GM12878 (cell line): ENCODE measurements at regions of chr9 and their contacts with region 1.

Region 1: DNA sequence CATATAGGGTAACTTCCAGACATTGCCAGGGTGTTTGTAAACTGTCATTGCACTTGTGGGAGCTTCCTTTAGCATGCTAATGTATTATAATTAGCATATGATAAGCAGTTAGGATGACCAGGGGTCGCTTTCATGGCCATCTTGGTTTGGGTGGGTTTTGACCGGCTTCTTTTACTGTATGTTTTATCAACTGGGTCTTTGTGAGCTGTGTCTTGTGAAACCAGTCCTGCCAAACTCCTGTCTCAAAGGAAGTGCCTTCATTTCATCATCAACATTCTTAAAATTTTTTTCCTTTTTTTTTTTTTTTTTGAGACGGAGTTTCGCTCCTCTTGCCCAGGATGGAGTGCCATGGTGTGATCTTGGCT is 11.9 kb upstream of the MELK start:
- DNase-seq: no peak
- ATAC-seq: no peak
- H3K4me3 ChIP-seq: no peak overlapping the region
- H3K27ac ChIP-seq: no peak overlapping the region
- H3K4me1 ChIP-seq: no peaks in the 10 kb centered on the region
- H3K27me3 ChIP-seq: no peaks in the 10 kb centered on the region
- CTCF ChIP-seq: no peak
- EP300 ChIP-seq: no peak
- POLR2A ChIP-seq: no peak
- RAD21 ChIP-seq: no peak

Region 2: DNA sequence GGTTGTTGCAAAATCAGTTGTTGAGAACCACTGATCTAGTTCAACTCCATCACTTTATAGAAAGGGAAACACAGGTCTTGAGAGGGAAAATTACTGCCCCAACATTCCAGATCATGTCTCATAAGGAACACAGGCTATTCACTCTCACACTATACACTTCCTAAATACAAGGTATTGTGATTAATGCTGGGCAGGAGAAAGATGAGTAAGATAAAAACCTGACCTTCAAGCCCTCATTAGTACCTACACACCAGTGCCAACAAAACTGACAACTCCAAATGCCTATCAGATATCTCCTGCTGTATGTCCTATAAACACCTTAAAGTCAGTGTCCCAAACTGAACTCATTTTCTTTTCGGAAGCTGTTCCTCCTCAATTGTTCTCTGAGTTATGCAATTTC is 310.8 kb before region 1 on chr9:
- CTCF ChIA-PET with region 1: interaction called, 4 read pairs
- POLR2A ChIA-PET with region 1: no interaction called
- RAD21 ChIA-PET with region 1: no interaction called
- SMC1A ChIA-PET with region 1: interaction called, 4 read pairs
- in situ Hi-C with region 1: no loop called
- intact Hi-C with region 1: loop called (anchors 5 kb)
- DNase-seq: no peak
- ATAC-seq: peak; percentile 56
- H3K4me3 ChIP-seq: no peak overlapping the region
- H3K27ac ChIP-seq: no peak overlapping the region
- H3K4me1 ChIP-seq: peaks cover 22% of the 10 kb centered on the region
- H3K27me3 ChIP-seq: no peaks in the 10 kb centered on the region
- CTCF ChIP-seq: no peak
- EP300 ChIP-seq: no peak
- POLR2A ChIP-seq: no peak
- RAD21 ChIP-seq: no peak

Region 3: DNA sequence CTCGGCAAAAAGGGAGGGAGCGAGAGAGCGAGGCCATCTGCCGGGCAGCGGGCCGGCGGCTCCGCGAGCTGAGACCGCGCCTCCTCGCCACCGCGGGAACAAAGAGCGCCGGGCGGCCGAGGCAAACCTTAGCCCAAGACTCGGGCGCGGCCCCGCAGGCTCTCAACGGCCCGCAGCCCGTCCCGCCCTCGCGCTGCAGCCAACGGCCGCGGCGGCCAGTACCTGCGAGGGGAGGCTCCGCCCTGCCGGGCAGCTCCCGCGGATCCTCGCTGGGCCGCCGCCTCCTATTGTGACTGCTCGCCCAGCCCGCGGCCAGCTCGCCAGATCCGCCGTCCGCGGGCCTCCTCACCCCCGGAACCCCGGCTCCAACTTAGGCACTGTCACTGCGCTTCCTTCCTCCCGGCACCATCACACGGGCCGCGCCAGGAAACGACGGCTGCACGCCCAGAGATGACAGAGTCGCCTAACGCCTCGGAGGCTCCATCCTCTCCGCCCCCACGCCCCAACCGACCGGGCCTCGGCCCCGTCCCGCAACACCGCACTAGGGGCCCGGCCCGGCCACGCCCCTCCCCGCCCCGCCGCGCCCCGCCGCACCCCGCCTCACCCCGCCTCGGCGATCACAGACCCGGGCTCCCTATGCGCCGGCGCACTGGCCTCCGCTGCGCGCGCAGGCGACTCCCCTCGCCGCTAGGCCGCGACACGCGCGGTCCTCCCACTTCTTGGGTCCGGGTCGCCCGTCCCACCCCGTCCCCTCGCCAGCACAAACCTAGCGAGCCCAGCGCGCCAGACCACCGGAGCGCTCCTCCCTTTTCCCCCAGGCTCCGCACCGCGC is 160.3 kb before region 1 on chr9:
- CTCF ChIA-PET with region 1: interaction called, 421 read pairs
- POLR2A ChIA-PET with region 1: interaction called, 3 read pairs
- RAD21 ChIA-PET with region 1: interaction called, 156 read pairs
- SMC1A ChIA-PET with region 1: interaction called, 287 read pairs
- in situ Hi-C with region 1: no loop called
- intact Hi-C with region 1: no loop called
- DNase-seq: peak; percentile 42
- ATAC-seq: peak; percentile 90
- H3K4me3 ChIP-seq: peak overlapping the region; percentile 76
- H3K27ac ChIP-seq: peak overlapping the region; percentile 89
- H3K4me1 ChIP-seq: peaks cover 13% of the 10 kb centered on the region
- H3K27me3 ChIP-seq: no peaks in the 10 kb centered on the region
- CTCF ChIP-seq: 0 out of 6 replicates have a peak, but pooled peaks of 1 of the 3 experiments have one; percentile 3
- EP300 ChIP-seq: no peak; a peak in 1 of 4 replicates
- POLR2A ChIP-seq: peak; percentile 88
- RAD21 ChIP-seq: no peak

Region 4: DNA sequence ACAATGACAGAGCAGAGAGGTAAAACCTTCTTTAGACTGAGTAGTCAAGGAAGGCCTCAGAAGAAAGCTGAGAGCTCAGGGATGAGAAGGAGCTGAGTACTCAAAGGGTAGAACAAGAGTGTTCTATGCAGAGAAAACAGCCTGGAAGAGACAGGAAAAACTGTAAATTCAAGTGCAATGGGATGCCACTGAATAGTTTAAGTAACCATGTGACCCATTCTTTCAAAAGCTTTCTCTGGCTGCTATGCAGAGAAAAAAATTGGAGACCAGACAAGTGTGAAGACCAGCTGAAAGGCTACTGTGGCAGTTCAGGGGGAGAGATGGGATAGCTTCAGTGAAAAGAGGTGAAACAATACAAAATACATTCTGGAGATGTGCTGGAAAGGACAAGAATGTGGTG is 99.5 kb before region 1 on chr9:
- CTCF ChIA-PET with region 1: interaction called, 23 read pairs
- POLR2A ChIA-PET with region 1: no interaction called
- RAD21 ChIA-PET with region 1: no interaction called
- SMC1A ChIA-PET with region 1: interaction called, 3 read pairs
- in situ Hi-C with region 1: no loop called
- intact Hi-C with region 1: no loop called
- DNase-seq: no peak
- ATAC-seq: no peak
- H3K4me3 ChIP-seq: no peak overlapping the region
- H3K27ac ChIP-seq: no peak overlapping the region
- H3K4me1 ChIP-seq: peaks cover 14% of the 10 kb centered on the region
- H3K27me3 ChIP-seq: no peaks in the 10 kb centered on the region
- CTCF ChIP-seq: no peak
- EP300 ChIP-seq: no peak
- POLR2A ChIP-seq: no peak
- RAD21 ChIP-seq: no peak

Region 5: GRCh38 chr9:36492865-36493264 is 68.0 kb before region 1 on chr9:
- CTCF ChIA-PET with region 1: no interaction called
- POLR2A ChIA-PET with region 1: no interaction called
- RAD21 ChIA-PET with region 1: no interaction called
- SMC1A ChIA-PET with region 1: no interaction called
- in situ Hi-C with region 1: no loop called
- intact Hi-C with region 1: no loop called
- DNase-seq: no peak
- ATAC-seq: no peak
- H3K4me3 ChIP-seq: no peak overlapping the region
- H3K27ac ChIP-seq: no peak overlapping the region
- H3K4me1 ChIP-seq: peaks cover 6% of the 10 kb centered on the region
- H3K27me3 ChIP-seq: no peaks in the 10 kb centered on the region
- CTCF ChIP-seq: no peak
- EP300 ChIP-seq: no peak
- POLR2A ChIP-seq: no peak
- RAD21 ChIP-seq: no peak

Region 6: GRCh38 chr9:36537861-36538260 is 23.0 kb before region 1 on chr9:
- CTCF ChIA-PET with region 1: no interaction called
- POLR2A ChIA-PET with region 1: no interaction called
- RAD21 ChIA-PET with region 1: no interaction called
- SMC1A ChIA-PET with region 1: no interaction called
- in situ Hi-C with region 1: no loop called
- intact Hi-C with region 1: no loop called
- DNase-seq: no peak
- ATAC-seq: no peak
- H3K4me3 ChIP-seq: no peak overlapping the region
- H3K27ac ChIP-seq: no peak overlapping the region
- H3K4me1 ChIP-seq: peaks cover 3% of the 10 kb centered on the region; the same call in 1 of the 2 replicates
- H3K27me3 ChIP-seq: no peaks in the 10 kb centered on the region
- CTCF ChIP-seq: no peak
- EP300 ChIP-seq: no peak
- POLR2A ChIP-seq: no peak
- RAD21 ChIP-seq: no peak

Region 7: GRCh38 chr9:36781533-36781932 is 220.7 kb after region 1 on chr9:
- CTCF ChIA-PET with region 1: no interaction called
- POLR2A ChIA-PET with region 1: no interaction called
- RAD21 ChIA-PET with region 1: no interaction called
- SMC1A ChIA-PET with region 1: no interaction called
- in situ Hi-C with region 1: no loop called
- intact Hi-C with region 1: no loop called
- DNase-seq: no peak
- ATAC-seq: no peak
- H3K4me3 ChIP-seq: no peak overlapping the region
- H3K27ac ChIP-seq: no peak overlapping the region
- H3K4me1 ChIP-seq: no peaks in the 10 kb centered on the region
- H3K27me3 ChIP-seq: peaks cover 0 to 5% of the 10 kb centered on the region in 2 experiments; a peak in 2 of 4 replicates
- CTCF ChIP-seq: no peak
- EP300 ChIP-seq: no peak
- POLR2A ChIP-seq: no peak
- RAD21 ChIP-seq: no peak

Region 8: DNA sequence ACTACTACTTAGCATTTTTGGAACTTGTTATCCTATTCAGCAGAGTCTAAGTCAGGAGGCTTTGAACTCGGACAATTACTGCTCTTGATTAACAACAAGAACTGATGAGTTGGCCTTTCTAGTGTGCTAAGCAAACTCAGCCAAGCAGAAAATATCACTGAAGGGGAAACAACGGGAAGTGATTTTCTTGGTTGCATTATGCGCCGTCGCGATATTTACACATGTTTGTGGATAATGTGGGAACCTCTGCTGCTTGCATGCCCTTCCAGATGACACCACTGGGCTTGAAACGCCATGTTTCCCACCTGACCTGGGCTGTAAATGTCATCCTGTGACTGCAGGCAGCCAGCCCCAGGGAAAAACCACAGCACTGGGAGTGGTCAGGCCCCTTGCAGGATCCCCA is 267.8 kb after region 1 on chr9:
- CTCF ChIA-PET with region 1: no interaction called
- POLR2A ChIA-PET with region 1: no interaction called
- RAD21 ChIA-PET with region 1: no interaction called
- SMC1A ChIA-PET with region 1: no interaction called
- in situ Hi-C with region 1: no loop called
- intact Hi-C with region 1: no loop called
- DNase-seq: no peak
- ATAC-seq: peak; percentile 13; the same call in 1 of the 3 replicates
- H3K4me3 ChIP-seq: no peak overlapping the region
- H3K27ac ChIP-seq: no peak overlapping the region
- H3K4me1 ChIP-seq: no peaks in the 10 kb centered on the region; the same call in 1 of the 2 replicates
- H3K27me3 ChIP-seq: peaks cover 0 to 2% of the 10 kb centered on the region in 2 experiments; a peak in 1 of 4 replicates
- CTCF ChIP-seq: no peak
- EP300 ChIP-seq: no peak
- POLR2A ChIP-seq: no peak
- RAD21 ChIP-seq: no peak